Mammary epithelial cell (primary cell): ENCODE measurements at regions of chr11 and their contacts with region 1.

Region 1: DNA sequence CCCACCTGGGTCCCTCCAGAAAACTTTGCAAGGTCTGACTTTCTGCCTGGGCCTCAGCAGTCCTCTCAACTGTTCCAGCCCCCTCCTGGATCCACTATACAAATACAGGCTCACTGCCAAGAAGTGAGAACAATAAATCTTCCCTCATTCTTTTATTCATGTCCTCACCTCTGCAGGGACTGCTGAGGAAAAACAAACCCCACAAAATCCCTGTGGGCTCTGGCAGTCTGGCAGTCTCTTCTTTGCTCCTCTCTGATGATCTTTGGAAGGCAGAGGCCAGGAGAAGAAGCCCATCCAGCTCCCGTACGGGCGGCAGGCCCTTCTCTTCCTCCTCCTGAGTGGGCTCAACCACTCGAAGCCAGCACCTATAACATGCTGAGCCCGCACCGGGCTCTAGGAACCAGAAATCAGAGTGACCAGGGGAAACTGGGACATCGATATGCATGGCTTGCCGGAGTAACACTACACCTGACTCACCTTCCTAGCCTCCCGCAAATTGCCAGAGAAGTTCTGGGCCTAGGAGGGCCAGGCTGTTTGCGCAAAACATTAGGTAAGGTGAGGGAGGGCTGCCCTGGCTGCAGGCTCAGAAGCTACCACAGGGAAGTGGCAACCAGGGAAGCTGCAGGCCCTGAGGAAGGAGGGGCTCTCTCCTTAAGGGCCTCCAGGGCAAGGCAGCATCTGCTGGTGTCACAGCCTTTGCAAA is 24.2 kb downstream of the TMPRSS5 start:
- DNase-seq: no peak
- H3K4me3 ChIP-seq: no peak overlapping the region
- H3K27ac ChIP-seq: no peak overlapping the region
- H3K4me1 ChIP-seq: no peaks in the 10 kb centered on the region
- H3K27me3 ChIP-seq: no peaks in the 10 kb centered on the region
- CTCF ChIP-seq: no peak

Region 2: GRCh38 chr11:113392236-113392921 is 289.5 kb before region 1 on chr11:
- CTCF ChIA-PET with region 1: no interaction called
- dilution Hi-C with region 1: loop called (anchors 10 kb)
- in situ Hi-C with region 1: no loop called
- intact Hi-C with region 1: no loop called
- DNase-seq: no peak
- H3K4me3 ChIP-seq: no peak overlapping the region
- H3K27ac ChIP-seq: no peak overlapping the region
- H3K4me1 ChIP-seq: peaks cover 10% of the 10 kb centered on the region
- H3K27me3 ChIP-seq: no peaks in the 10 kb centered on the region
- CTCF ChIP-seq: no peak

Region 3: DNA sequence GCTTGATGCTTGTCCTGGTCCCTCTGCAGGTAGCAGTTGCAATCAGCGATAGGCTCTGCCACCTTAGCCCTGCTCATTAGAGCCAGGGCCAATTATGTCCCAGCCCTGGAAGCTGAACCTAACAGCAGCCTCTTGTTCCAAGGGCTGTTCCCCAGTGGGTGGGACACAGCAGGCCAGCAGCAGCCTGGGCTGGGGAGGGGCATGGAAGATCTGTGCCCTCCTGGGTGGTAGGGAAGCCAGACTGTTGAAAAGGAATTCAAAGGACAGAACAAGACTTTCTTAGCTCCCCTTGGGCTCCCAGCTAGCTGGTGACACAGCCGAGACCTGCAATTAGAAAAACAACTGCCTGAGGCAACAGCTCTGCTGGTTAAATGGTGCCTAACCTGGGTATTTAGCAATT is 224.1 kb before region 1 on chr11:
- CTCF ChIA-PET with region 1: no interaction called
- dilution Hi-C with region 1: loop called (anchors 10 kb)
- in situ Hi-C with region 1: no loop called
- intact Hi-C with region 1: no loop called
- DNase-seq: no peak
- H3K4me3 ChIP-seq: no peak overlapping the region
- H3K27ac ChIP-seq: no peak overlapping the region
- H3K4me1 ChIP-seq: no peaks in the 10 kb centered on the region
- H3K27me3 ChIP-seq: no peaks in the 10 kb centered on the region
- CTCF ChIP-seq: no peak

Region 4: DNA sequence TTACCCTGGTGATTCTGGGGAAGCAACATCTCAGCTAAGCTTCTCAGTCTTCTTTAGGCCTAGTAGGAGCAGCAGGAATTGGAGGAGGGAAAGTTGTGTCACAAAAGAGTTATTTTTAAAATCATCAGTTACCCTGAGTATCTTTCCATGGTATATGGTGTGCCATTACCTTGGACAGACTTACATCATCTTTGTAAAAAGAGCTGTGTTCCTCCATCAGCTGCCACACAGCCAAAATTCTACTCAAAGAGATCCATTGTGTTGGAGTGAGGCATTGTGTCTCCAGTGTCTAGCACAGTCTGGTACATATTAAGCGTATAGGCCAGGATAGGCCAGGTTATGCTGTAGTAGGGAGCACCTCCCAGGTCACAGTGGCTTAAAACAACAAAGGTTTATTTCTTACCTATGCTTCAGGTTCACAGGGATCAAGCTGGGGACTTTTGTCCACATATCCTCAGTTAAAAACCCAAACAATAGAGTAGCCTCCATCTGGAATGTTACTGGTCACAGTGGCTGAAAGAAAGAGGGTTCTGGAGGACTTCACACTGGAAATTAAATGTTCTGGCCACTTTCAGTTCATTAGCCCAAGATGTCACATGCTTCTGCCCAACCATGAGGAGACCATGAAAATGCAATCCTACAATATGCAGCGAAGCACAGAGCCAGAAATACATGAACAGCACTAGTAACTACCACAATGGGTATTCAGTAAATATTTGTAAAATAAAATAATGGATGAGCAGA is 34.2 kb after region 1 on chr11:
- CTCF ChIA-PET with region 1: no interaction called
- dilution Hi-C with region 1: no loop called
- in situ Hi-C with region 1: no loop called
- intact Hi-C with region 1: no loop called
- DNase-seq: no peak
- H3K4me3 ChIP-seq: no peak overlapping the region
- H3K27ac ChIP-seq: no peak overlapping the region
- H3K4me1 ChIP-seq: peaks cover under 1% of the 10 kb centered on the region
- H3K27me3 ChIP-seq: no peaks in the 10 kb centered on the region
- CTCF ChIP-seq: no peak

Region 5: GRCh38 chr11:113906038-113906437 is 224.2 kb after region 1 on chr11:
- CTCF ChIA-PET with region 1: no interaction called
- dilution Hi-C with region 1: no loop called
- in situ Hi-C with region 1: no loop called
- intact Hi-C with region 1: no loop called
- DNase-seq: no peak
- H3K4me3 ChIP-seq: no peak overlapping the region
- H3K27ac ChIP-seq: no peak overlapping the region
- H3K4me1 ChIP-seq: no peaks in the 10 kb centered on the region
- H3K27me3 ChIP-seq: peaks cover 14% of the 10 kb centered on the region
- CTCF ChIP-seq: no peak